ENCODE measurements at regions of chr10 and their contacts with region 1.

Region 1: DNA sequence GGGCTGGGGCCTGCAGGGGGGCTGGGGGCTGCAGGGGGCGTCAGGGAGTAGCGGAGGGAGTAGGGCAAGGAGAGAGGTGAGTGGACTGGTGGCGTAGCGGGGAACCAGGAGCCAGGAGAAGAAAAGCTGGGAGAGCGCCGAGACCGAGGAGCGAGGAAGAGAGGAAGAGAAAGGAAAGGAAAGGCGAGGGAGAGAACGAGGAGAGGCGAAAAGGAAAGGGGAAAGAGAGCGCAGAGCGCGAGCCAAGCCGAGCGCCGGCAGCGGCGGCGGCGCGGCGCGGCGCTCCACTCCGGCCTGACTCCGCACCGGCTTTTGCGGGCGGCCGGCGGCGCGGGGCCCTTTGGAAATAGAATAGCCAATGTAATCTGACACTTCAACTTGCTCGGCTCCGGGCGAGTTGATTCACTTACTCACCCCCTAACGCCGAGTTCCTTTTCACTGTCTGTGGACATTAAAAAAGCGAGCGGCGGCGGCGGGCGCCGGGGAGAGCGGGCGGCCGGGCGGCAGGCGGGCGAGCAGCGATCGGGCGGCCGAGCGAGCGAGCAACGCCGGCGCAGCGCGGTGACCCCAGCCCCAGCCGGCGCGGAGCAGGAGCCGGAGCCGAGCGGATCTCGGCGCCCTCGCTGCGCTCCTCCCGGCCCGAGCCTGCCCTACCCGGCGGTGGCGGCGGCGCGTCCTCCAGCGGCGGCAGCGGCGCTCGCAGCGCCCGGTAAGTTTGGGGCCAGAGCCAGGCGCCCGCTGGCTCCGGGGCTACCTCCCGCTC is at the start of gene ZMIZ1:
- DNase-seq: peak; percentile 92
- H3K4me3 ChIP-seq: peak within 1 kb of the TSS; percentile 92 to 93
- H3K27ac ChIP-seq: peak within 1 kb of the TSS; percentile 97 to 99
- H3K4me1 ChIP-seq: peaks cover 19% of the 10 kb centered on the region
- H3K27me3 ChIP-seq: no peaks in the 10 kb centered on the region
- CTCF ChIP-seq: peak in 2 of 4 experiments; percentile 30 to 34
- POLR2A ChIP-seq: peak; percentile 70
- total RNA-seq, gene ZMIZ1: 69.6 to 78.5 TPM

Region 2: GRCh38 chr10:78047314-78047891 is 1021.3 kb before region 1 on chr10:
- intact Hi-C with region 1: loop called (anchors 10 kb)
- DNase-seq: peak; percentile 85
- H3K4me3 ChIP-seq: no peak overlapping the region
- H3K27ac ChIP-seq: no peak overlapping the region
- H3K4me1 ChIP-seq: no peaks in the 10 kb centered on the region
- H3K27me3 ChIP-seq: no peaks in the 10 kb centered on the region
- CTCF ChIP-seq: peak; percentile 84 to 90 (median 87)
- POLR2A ChIP-seq: no peak

Region 3: GRCh38 chr10:78302989-78303854 is 765.5 kb before region 1 on chr10:
- intact Hi-C with region 1: loop called (anchors 5 kb)
- DNase-seq: peak; percentile 90
- H3K4me3 ChIP-seq: peak overlapping the region; percentile 48 to 54
- H3K27ac ChIP-seq: peak overlapping the region; percentile 84 to 87
- H3K4me1 ChIP-seq: peaks cover 4% of the 10 kb centered on the region
- H3K27me3 ChIP-seq: no peaks in the 10 kb centered on the region
- CTCF ChIP-seq: peak; percentile 54 to 91 (median 77)
- POLR2A ChIP-seq: peak; percentile 71

Region 4: GRCh38 chr10:78972947-78973900 is 95.5 kb before region 1 on chr10:
- intact Hi-C with region 1: loop called (anchors 2 kb)
- DNase-seq: peak; percentile 68
- H3K4me3 ChIP-seq: peak overlapping the region; percentile 40 to 48
- H3K27ac ChIP-seq: peak overlapping the region; percentile 95 to 96
- H3K4me1 ChIP-seq: peaks cover 6% of the 10 kb centered on the region
- H3K27me3 ChIP-seq: no peaks in the 10 kb centered on the region
- CTCF ChIP-seq: peak in 2 of 4 experiments; percentile 19 to 29
- POLR2A ChIP-seq: no peak

Region 5: DNA sequence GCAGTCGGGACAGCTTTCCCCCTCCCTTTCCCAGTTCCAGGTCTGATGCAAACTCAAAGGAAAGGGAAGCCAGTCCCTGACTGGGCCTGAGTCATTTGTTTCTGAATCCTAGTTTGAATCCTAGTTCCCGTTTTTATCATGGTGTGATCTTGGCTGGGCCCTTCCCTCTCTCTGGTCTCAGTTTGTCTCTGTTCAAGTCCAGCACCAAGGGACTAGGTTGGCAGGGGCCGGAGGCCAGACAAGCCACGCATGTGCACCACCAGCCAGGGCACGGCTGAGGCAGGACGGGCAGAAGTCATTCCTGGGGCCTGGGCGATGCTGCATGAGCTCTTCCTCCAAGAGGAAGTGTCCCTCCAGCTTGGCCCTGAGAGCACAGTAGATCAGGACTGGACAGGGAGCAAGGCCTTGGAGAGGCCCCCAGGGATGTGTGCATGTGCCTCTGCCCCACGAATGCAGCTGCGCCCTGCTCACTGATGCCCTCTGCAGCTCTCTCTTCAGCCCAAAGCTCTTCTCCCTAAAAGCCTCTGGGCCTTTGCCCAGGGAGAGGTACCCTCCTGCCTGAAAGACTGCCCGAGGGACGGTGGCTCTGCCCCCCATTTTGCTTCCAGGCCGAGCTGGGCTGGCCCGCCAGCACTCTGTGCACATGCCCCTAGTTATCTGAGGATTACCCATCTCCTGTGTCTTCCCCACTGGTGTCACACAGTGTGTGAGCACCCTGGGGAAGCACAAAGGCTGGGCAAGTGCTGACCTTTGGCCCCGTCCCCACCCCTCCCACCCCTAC is 86.7 kb after region 1 on chr10:
- intact Hi-C with region 1: loop called (anchors 5 kb)
- DNase-seq: no peak
- H3K4me3 ChIP-seq: no peak overlapping the region
- H3K27ac ChIP-seq: peak overlapping the region in 1 of 2 donors; percentile 56
- H3K4me1 ChIP-seq: peaks cover 21% of the 10 kb centered on the region
- H3K27me3 ChIP-seq: no peaks in the 10 kb centered on the region
- CTCF ChIP-seq: no peak
- POLR2A ChIP-seq: no peak